ENCODE measurements at regions of chr22 and their contacts with region 1.

Region 1: DNA sequence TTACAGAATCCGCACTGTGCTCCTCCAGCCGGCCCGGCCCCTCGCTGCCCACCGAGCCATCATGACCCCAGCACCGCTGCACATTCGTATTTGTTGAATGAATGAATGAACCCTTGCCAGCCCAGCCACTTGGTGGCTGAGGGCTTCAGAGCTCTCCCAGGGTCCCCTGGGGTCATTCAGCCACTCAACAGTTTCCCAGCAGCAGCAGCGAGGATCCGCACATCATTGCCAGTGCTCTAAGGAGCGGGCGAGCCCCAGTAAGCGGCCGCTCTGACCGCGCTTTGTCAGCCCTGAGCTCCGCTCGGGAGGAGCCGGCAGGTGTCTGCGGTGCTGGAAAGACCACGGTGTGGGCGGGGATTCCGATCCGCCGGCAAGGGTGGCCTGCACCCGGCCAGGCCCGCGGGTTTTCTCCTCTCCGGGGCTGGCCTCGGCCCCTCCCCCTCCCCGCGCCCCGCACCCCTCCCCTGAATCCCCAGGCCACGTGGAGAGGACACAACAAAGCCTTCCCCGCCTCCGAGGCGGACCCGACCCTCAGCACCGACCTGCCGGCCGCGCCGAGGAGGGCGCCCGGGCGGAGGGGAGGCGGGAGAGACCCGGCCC is 563 bp downstream of the BID start:
- DNase-seq: peak; percentile 27 to 72 (median 59)
- H3K4me3 ChIP-seq: peak overlapping the region; percentile 59 to 80 (median 76)
- H3K27ac ChIP-seq: peak overlapping the region in 1 of 2 experiments; percentile 64
- H3K4me1 ChIP-seq: peaks cover 4 to 87% (median 75%) of the 10 kb centered on the region in 4 experiments
- H3K27me3 ChIP-seq: no peaks in the 10 kb centered on the region

Region 2: DNA sequence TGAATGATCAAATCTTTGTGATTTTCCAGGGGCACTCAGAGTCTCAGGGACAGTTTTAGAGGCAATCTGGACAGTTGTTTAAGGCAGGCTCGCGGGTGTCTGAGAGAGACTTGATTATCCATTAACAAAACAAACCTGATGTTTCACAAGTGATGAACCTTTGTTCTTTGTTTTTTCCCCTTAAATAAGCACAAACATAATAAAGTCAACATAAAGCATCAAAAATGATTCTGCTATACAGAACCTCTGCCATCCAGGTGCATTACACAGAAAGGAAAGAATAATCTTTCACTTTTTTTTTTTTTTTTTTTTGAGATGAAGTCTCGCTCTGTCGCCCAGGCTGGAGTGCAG is 12.6 kb before region 1 on chr22:
- CTCF ChIA-PET with region 1: interaction called, 5 read pairs
- POLR2A ChIA-PET with region 1: interaction called, 12 read pairs
- DNase-seq: no peak
- H3K4me3 ChIP-seq: no peak overlapping the region
- H3K27ac ChIP-seq: peak overlapping the region in 1 of 2 experiments; percentile 59
- H3K4me1 ChIP-seq: peaks cover 7 to 36% (median 24%) of the 10 kb centered on the region in 4 experiments
- H3K27me3 ChIP-seq: no peaks in the 10 kb centered on the region

Region 3: GRCh38 chr22:17785185-17786184 is 11.8 kb after region 1 on chr22:
- CTCF ChIA-PET with region 1: interaction called, 47 read pairs
- POLR2A ChIA-PET with region 1: no interaction called
- DNase-seq: peak; percentile 53 to 76 (median 65)
- H3K4me3 ChIP-seq: no peak overlapping the region
- H3K27ac ChIP-seq: peak overlapping the region in 1 of 2 experiments; percentile 14
- H3K4me1 ChIP-seq: peaks cover 0 to 40% (median 34%) of the 10 kb centered on the region in 4 experiments
- H3K27me3 ChIP-seq: no peaks in the 10 kb centered on the region